Naive thymus-derived CD4-positive, alpha-beta T cell (primary cell): ENCODE measurements at regions of chr10 and their contacts with region 1.

Region 1: DNA sequence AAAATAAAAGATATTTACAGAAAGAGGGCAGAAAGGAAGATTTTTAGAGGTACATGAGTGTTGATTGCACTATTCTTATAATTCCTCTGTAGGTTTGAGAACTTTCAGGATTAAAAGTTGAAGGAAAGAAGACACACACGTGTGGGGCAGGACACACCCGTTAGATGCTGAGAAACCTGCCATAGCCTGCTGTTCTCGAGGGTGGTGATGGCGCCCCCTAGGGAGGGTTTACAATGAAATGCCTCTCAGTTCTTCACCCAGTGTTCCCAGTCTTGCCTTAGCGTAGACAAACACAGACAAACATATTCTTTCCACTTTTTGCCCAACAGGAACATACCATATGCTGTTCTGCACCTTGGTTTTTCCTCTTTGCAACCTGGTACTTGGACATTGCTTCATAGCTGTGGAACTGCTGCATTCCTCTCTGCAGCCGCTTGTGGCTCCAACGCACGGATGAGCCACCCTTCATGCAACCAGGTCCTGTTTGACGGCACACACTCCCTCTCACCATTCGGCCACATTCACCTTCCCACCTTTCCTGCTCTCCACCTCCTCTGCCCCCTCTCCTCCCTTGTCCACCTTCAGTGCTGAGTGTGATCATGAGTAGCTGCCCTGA is 23.3 kb upstream of the HSPA12A start:
- DNase-seq: peak in 5 of 9 donors; percentile 25 to 33 (median 30)
- ATAC-seq: no peak
- H3K4me3 ChIP-seq: no peak overlapping the region
- H3K4me3 Mint-ChIP-seq: no peak overlapping the region
- H3K27ac ChIP-seq: no peak overlapping the region
- H3K27ac Mint-ChIP-seq: peak overlapping the region in 1 of 9 donors; percentile 38
- H3K4me1 ChIP-seq: no peaks in the 10 kb centered on the region
- H3K4me1 Mint-ChIP-seq: peaks cover 0 to 8% (median 0%) of the 10 kb centered on the region in 7 donors
- H3K27me3 ChIP-seq: no peaks in the 10 kb centered on the region
- H3K27me3 Mint-ChIP-seq: peaks cover 26 to 83% (median 67%) of the 10 kb centered on the region in 5 donors

Region 2: GRCh38 chr10:116465546-116465945 is 300.1 kb before region 1 on chr10:
- CTCF ChIA-PET with region 1: no interaction called
- POLR2A ChIA-PET with region 1: no interaction called
- intact Hi-C with region 1: no loop called
- DNase-seq: no peak
- ATAC-seq: peak; percentile 60
- H3K4me3 ChIP-seq: no peak overlapping the region
- H3K4me3 Mint-ChIP-seq: no peak overlapping the region
- H3K27ac ChIP-seq: no peak overlapping the region
- H3K27ac Mint-ChIP-seq: no peak overlapping the region
- H3K4me1 ChIP-seq: no peaks in the 10 kb centered on the region
- H3K4me1 Mint-ChIP-seq: no peaks in the 10 kb centered on the region
- H3K27me3 ChIP-seq: no peaks in the 10 kb centered on the region
- H3K27me3 Mint-ChIP-seq: peaks cover 0 to 22% (median 6%) of the 10 kb centered on the region in 5 donors

Region 3: DNA sequence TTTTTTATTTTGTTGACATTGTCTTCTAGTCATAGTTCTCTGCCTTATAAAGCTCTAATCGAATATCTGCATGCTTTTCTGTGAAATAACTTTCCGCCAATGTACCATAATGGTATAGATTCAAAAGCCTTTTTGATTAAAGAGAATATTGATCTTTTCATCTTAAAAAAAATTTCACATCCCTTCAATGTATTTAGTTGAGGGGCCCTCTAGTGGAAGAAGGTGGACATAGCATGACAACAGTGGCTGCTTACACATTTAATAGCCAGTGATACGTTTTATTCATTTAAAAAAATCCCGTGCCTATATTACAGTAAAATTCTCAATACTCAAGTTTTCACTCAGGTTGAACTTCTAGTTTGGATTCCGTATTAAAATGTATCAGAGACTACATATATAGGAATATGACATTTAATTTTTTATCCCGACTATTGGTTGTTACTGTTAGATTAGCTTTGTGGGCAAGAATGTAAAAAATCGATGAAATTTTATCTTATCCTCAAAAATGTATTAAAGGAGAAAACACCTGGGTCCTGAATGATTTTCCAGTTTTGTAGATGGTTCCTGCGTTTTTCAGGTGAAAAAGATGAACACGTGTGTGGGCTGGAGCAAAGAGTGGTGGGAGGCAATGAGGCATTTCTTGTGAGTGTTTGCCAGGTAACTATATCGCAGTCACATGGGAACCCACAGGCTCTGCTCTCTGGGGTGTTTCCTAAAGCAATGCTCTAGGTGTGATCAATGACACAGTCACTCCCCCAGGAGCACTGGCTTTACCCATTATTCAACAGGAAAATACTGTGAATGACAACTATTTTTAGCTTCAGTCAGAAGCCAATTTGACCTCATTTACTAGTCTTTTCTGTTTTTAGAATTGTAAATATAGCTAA is 244.0 kb before region 1 on chr10:
- CTCF ChIA-PET with region 1: no interaction called
- POLR2A ChIA-PET with region 1: no interaction called
- intact Hi-C with region 1: loop called in 1 of 2 experiments (anchors 5 kb)
- DNase-seq: peak in 5 of 9 donors; percentile 2 to 19 (median 6)
- ATAC-seq: no peak
- H3K4me3 ChIP-seq: no peak overlapping the region
- H3K4me3 Mint-ChIP-seq: no peak overlapping the region
- H3K27ac ChIP-seq: no peak overlapping the region
- H3K27ac Mint-ChIP-seq: no peak overlapping the region
- H3K4me1 ChIP-seq: no peaks in the 10 kb centered on the region
- H3K4me1 Mint-ChIP-seq: no peaks in the 10 kb centered on the region
- H3K27me3 ChIP-seq: no peaks in the 10 kb centered on the region
- H3K27me3 Mint-ChIP-seq: peaks cover 0 to 16% (median 8%) of the 10 kb centered on the region in 5 donors

Region 4: DNA sequence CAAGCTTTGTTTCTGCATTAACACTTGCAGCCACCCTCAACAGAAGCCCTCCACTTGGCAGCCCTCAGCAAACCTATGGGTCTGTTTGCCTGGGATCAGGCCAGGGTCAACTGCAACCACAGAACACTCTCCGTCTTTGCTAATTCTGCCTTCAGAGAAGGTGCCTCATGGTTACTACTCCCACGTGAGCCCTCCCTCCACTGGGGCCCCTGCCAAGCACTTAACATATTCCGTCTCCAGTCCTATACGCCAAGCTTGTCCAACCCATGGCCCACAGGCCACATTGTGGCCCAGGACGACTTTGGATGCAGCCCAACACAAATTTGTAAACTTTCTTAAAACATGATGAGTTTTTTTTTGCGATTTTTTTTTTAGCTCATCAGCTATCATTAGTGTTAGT is 78.0 kb before region 1 on chr10:
- CTCF ChIA-PET with region 1: no interaction called
- POLR2A ChIA-PET with region 1: no interaction called
- intact Hi-C with region 1: loop called (anchors 1 kb)
- DNase-seq: no peak
- ATAC-seq: no peak
- H3K4me3 ChIP-seq: no peak overlapping the region
- H3K4me3 Mint-ChIP-seq: no peak overlapping the region
- H3K27ac ChIP-seq: no peak overlapping the region
- H3K27ac Mint-ChIP-seq: no peak overlapping the region
- H3K4me1 ChIP-seq: no peaks in the 10 kb centered on the region
- H3K4me1 Mint-ChIP-seq: peaks cover 0 to 3% (median 0%) of the 10 kb centered on the region in 7 donors
- H3K27me3 ChIP-seq: peaks cover 0 to 3% of the 10 kb centered on the region in 2 donors
- H3K27me3 Mint-ChIP-seq: peaks cover 4 to 56% (median 39%) of the 10 kb centered on the region in 5 donors